ENCODE measurements at regions of chr9 and their contacts with region 1.

Region 1: DNA sequence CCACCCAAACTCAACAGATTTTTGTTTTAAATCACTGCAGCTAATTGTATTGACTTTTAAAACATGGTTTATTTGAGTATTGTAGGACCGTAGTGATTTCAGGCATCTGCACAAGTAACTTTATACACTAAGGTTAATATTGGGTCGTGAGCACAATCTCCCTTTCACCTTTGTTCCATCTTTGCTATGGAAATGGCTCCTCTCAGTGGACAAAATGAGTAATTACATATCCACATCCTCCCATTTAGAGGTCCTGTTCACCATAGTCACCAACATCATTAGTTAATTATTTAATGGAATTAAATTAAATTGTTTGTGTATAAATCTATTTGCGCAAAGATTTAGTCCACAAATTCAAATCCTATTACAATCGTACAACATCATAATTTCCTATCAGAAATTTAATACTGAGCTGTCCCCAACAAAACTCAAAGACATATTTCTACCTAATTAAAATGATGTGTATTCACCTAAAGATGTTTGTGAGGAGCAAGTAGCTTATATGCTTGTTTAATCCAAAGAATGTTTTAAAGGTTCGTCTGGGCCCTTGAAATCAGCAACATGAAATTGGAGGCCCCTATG is 173.0 kb upstream of the DAPK1 start:
- DNase-seq: peak in 3 of 14 experiments; percentile 54 to 68 (median 61)
- ATAC-seq: no peak
- H3K4me3 ChIP-seq: no peak overlapping the region
- H3K4me3 Mint-ChIP-seq: no peak overlapping the region
- H3K27ac ChIP-seq: no peak overlapping the region
- H3K27ac Mint-ChIP-seq: no peak overlapping the region
- H3K4me1 ChIP-seq: no peaks in the 10 kb centered on the region
- H3K4me1 Mint-ChIP-seq: no peaks in the 10 kb centered on the region
- H3K27me3 ChIP-seq: peaks cover 0 to 6% of the 10 kb centered on the region in 2 experiments
- H3K27me3 Mint-ChIP-seq: peaks cover 26% of the 10 kb centered on the region
- CTCF ChIP-seq: peak; percentile 69

Region 2: GRCh38 chr9:86202338-86202882 is 1122.3 kb before region 1 on chr9:
- CTCF ChIA-PET with region 1: no interaction called
- POLR2A ChIA-PET with region 1: no interaction called
- intact Hi-C with region 1: loop called (anchors 2 to 5 kb)
- DNase-seq: peak in 7 of 14 experiments; percentile 1 to 58 (median 22)
- ATAC-seq: peak; percentile 54
- H3K4me3 ChIP-seq: no peak overlapping the region
- H3K4me3 Mint-ChIP-seq: no peak overlapping the region
- H3K27ac ChIP-seq: no peak overlapping the region
- H3K27ac Mint-ChIP-seq: no peak overlapping the region
- H3K4me1 ChIP-seq: no peaks in the 10 kb centered on the region
- H3K4me1 Mint-ChIP-seq: no peaks in the 10 kb centered on the region
- H3K27me3 ChIP-seq: peaks cover 0 to 4% of the 10 kb centered on the region in 2 experiments
- H3K27me3 Mint-ChIP-seq: peaks cover 14% of the 10 kb centered on the region
- CTCF ChIP-seq: peak; percentile 84

Region 3: GRCh38 chr9:86434039-86434726 is 890.5 kb before region 1 on chr9:
- CTCF ChIA-PET with region 1: no interaction called
- POLR2A ChIA-PET with region 1: no interaction called
- intact Hi-C with region 1: loop called (anchors 1 kb)
- DNase-seq: peak in 3 of 14 experiments; percentile 43 to 48 (median 45)
- ATAC-seq: no peak
- H3K4me3 ChIP-seq: no peak overlapping the region
- H3K4me3 Mint-ChIP-seq: no peak overlapping the region
- H3K27ac ChIP-seq: no peak overlapping the region
- H3K27ac Mint-ChIP-seq: no peak overlapping the region
- H3K4me1 ChIP-seq: no peaks in the 10 kb centered on the region
- H3K4me1 Mint-ChIP-seq: no peaks in the 10 kb centered on the region
- H3K27me3 ChIP-seq: peaks cover 0 to 2% of the 10 kb centered on the region in 2 experiments
- H3K27me3 Mint-ChIP-seq: peaks cover 40% of the 10 kb centered on the region
- CTCF ChIP-seq: peak; percentile 54

Region 4: GRCh38 chr9:86614871-86615849 is 709.5 kb before region 1 on chr9:
- CTCF ChIA-PET with region 1: no interaction called
- POLR2A ChIA-PET with region 1: no interaction called
- intact Hi-C with region 1: loop called in 1 of 2 experiments (anchors 10 kb)
- DNase-seq: peak in 2 of 14 experiments; percentile 1 to 3
- ATAC-seq: no peak
- H3K4me3 ChIP-seq: no peak overlapping the region
- H3K4me3 Mint-ChIP-seq: no peak overlapping the region
- H3K27ac ChIP-seq: no peak overlapping the region
- H3K27ac Mint-ChIP-seq: no peak overlapping the region
- H3K4me1 ChIP-seq: no peaks in the 10 kb centered on the region
- H3K4me1 Mint-ChIP-seq: no peaks in the 10 kb centered on the region
- H3K27me3 ChIP-seq: peaks cover 0 to 3% of the 10 kb centered on the region in 2 experiments
- H3K27me3 Mint-ChIP-seq: peaks cover 21% of the 10 kb centered on the region
- CTCF ChIP-seq: peak; percentile 17

Region 5: GRCh38 chr9:87119328-87119881 is 205.3 kb before region 1 on chr9:
- CTCF ChIA-PET with region 1: no interaction called
- POLR2A ChIA-PET with region 1: no interaction called
- intact Hi-C with region 1: loop called in 1 of 2 experiments (anchors 10 kb)
- DNase-seq: no peak
- ATAC-seq: no peak
- H3K4me3 ChIP-seq: no peak overlapping the region
- H3K4me3 Mint-ChIP-seq: no peak overlapping the region
- H3K27ac ChIP-seq: no peak overlapping the region
- H3K27ac Mint-ChIP-seq: no peak overlapping the region
- H3K4me1 ChIP-seq: no peaks in the 10 kb centered on the region
- H3K4me1 Mint-ChIP-seq: no peaks in the 10 kb centered on the region
- H3K27me3 ChIP-seq: no peaks in the 10 kb centered on the region
- H3K27me3 Mint-ChIP-seq: peaks cover 24% of the 10 kb centered on the region
- CTCF ChIP-seq: no peak

Region 6: GRCh38 chr9:87395804-87396479 is 71.2 kb after region 1 on chr9:
- CTCF ChIA-PET with region 1: no interaction called
- POLR2A ChIA-PET with region 1: no interaction called
- intact Hi-C with region 1: no loop called
- DNase-seq: no peak
- ATAC-seq: no peak
- H3K4me3 ChIP-seq: no peak overlapping the region
- H3K4me3 Mint-ChIP-seq: no peak overlapping the region
- H3K27ac ChIP-seq: no peak overlapping the region
- H3K27ac Mint-ChIP-seq: no peak overlapping the region
- H3K4me1 ChIP-seq: no peaks in the 10 kb centered on the region
- H3K4me1 Mint-ChIP-seq: no peaks in the 10 kb centered on the region
- H3K27me3 ChIP-seq: no peaks in the 10 kb centered on the region
- H3K27me3 Mint-ChIP-seq: peaks cover 6% of the 10 kb centered on the region
- CTCF ChIP-seq: no peak

Measured in CD4-positive, alpha-beta T cell (primary cell).